HepG2 (cell line): ENCODE measurements at regions of chr2 and their contacts with region 1.

Region 1: GRCh38 chr2:38377050-38377828 is at the start of gene ATL2:
- DNase-seq: peak; percentile 91
- ATAC-seq: peak; percentile 85
- H3K4me3 ChIP-seq: peak within 1 kb of the TSS; percentile 95 to 100 (median 99)
- H3K27ac ChIP-seq: peak within 1 kb of the TSS; percentile 90
- H3K4me1 ChIP-seq: peaks cover 74% of the 10 kb centered on the region
- H3K27me3 ChIP-seq: no peaks in the 10 kb centered on the region; a peak in 1 of 5 replicates
- CTCF ChIP-seq: no peak; the same call in 1 of the 2 replicates
- EP300 ChIP-seq: peak in 1 of 2 experiments; percentile 53; a peak in 3 of 4 replicates
- POLR2A ChIP-seq: peak; percentile 92 to 96
- RAD21 ChIP-seq: peak; percentile 77; the same call in 1 of the 2 replicates
- total RNA-seq, gene ATL2: 110 and 119 TPM in 2 replicates

Region 2: GRCh38 chr2:38315707-38316333 is 61.4 kb before region 1 on chr2:
- CTCF ChIA-PET with region 1: no interaction called
- POLR2A ChIA-PET with region 1: no interaction called
- in situ Hi-C with region 1: no loop called
- intact Hi-C with region 1: loop called (anchors 2 kb)
- DNase-seq: peak; percentile 68
- ATAC-seq: peak; percentile 82
- H3K4me3 ChIP-seq: no peak overlapping the region
- H3K27ac ChIP-seq: no peak overlapping the region
- H3K4me1 ChIP-seq: 0 out of 2 replicates have a peak, but pooled peaks cover 6% of the 10 kb centered on the region
- H3K27me3 ChIP-seq: no peaks in the 10 kb centered on the region
- CTCF ChIP-seq: peak; percentile 72
- EP300 ChIP-seq: no peak
- POLR2A ChIP-seq: no peak
- RAD21 ChIP-seq: peak; percentile 83

Region 3: GRCh38 chr2:38406597-38407110 is 29.4 kb after region 1 on chr2:
- CTCF ChIA-PET with region 1: no interaction called
- POLR2A ChIA-PET with region 1: interaction called, 28 read pairs
- in situ Hi-C with region 1: no loop called
- intact Hi-C with region 1: loop called (anchors 1 kb)
- DNase-seq: peak; percentile 82
- ATAC-seq: peak; percentile 77
- H3K4me3 ChIP-seq: peak overlapping the region; percentile 49 to 56 (median 51)
- H3K27ac ChIP-seq: peak overlapping the region; percentile 86
- H3K4me1 ChIP-seq: peaks cover 55% of the 10 kb centered on the region
- H3K27me3 ChIP-seq: no peaks in the 10 kb centered on the region
- CTCF ChIP-seq: no peak
- EP300 ChIP-seq: peak in 1 of 2 experiments; percentile 73; a peak in 2 of 4 replicates
- POLR2A ChIP-seq: no peak
- RAD21 ChIP-seq: no peak

Region 4: DNA sequence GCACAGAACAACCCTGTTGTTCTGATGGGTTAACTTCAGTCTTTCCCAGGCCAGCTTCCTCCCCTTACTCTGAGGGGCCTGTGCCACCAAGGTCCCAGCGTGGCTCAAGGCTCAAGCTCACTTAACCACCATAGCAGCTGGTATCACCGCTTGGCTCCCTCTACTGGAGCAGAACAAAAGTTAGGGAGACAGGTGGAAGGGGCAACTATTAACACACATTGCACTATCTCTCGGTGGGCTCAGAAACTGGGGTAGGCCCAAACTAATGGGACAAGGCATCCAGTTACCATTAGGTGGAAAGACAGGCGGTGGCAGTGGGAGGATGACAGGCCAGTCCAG is 88.5 kb after region 1 on chr2:
- CTCF ChIA-PET with region 1: no interaction called
- POLR2A ChIA-PET with region 1: interaction called, 6 read pairs
- in situ Hi-C with region 1: no loop called
- intact Hi-C with region 1: loop called (anchors 5 kb)
- DNase-seq: peak; percentile 75
- ATAC-seq: peak; percentile 91
- H3K4me3 ChIP-seq: no peak overlapping the region
- H3K27ac ChIP-seq: no peak overlapping the region
- H3K4me1 ChIP-seq: peaks cover 49% of the 10 kb centered on the region
- H3K27me3 ChIP-seq: no peaks in the 10 kb centered on the region; a peak in 2 of 5 replicates
- CTCF ChIP-seq: peak; percentile 92
- EP300 ChIP-seq: no peak
- POLR2A ChIP-seq: no peak
- RAD21 ChIP-seq: peak; percentile 88

Region 5: GRCh38 chr2:38734299-38735058 is 357.2 kb after region 1 on chr2:
- CTCF ChIA-PET with region 1: no interaction called
- POLR2A ChIA-PET with region 1: no interaction called
- in situ Hi-C with region 1: no loop called
- intact Hi-C with region 1: loop called (anchors 10 kb)
- DNase-seq: no peak
- ATAC-seq: no peak
- H3K4me3 ChIP-seq: no peak overlapping the region
- H3K27ac ChIP-seq: peak overlapping the region; percentile 40
- H3K4me1 ChIP-seq: peaks cover 66% of the 10 kb centered on the region
- H3K27me3 ChIP-seq: no peaks in the 10 kb centered on the region
- CTCF ChIP-seq: no peak
- EP300 ChIP-seq: no peak
- POLR2A ChIP-seq: no peak
- RAD21 ChIP-seq: no peak